Aorta (tissue), 5 donors: ENCODE measurements at regions of chr12 and their contacts with region 1.

Region 1: GRCh38 chr12:103965590-103966504 is at the start of gene TDG:
- DNase-seq: peak; percentile 99
- ATAC-seq: peak; percentile 99
- H3K4me3 ChIP-seq: peak within 1 kb of the TSS; percentile 79 to 97
- H3K27ac ChIP-seq: peak within 1 kb of the TSS; percentile 78 to 93
- H3K4me1 ChIP-seq: peaks cover 2 to 9% of the 10 kb centered on the region in 2 donors
- H3K27me3 ChIP-seq: no peaks in the 10 kb centered on the region
- total RNA-seq, gene TDG: 20.4 to 22.2 TPM

Region 2: DNA sequence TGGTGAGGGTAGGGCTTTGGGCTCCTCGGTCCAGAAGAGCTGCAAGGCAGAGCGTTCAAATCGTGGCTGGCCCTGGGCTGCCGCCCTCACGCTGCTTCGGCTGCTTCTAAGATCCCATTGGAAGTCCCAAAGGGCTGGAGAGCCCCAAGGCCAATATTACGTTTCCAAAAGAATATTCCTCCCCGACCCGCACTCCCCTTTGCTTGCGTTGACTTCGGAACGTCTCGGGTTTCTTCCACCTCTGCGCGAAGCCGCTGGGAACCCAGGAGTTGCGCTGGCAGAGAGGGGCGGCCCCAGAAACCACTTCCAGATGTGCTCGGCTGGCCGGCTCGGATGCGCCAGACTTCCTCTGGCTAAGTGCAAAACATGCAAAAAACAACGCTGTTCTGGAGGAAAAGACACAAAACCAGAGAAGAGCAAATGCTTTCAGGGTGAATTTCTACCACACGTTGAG is 84.1 kb after region 1 on chr12 and contains the start of gene GLT8D2:
- intact Hi-C with region 1: loop called in 1 of 2 experiments (anchors 10 kb)
- DNase-seq: peak; percentile 75 to 86
- ATAC-seq: peak; percentile 85
- H3K4me3 ChIP-seq: peak within 1 kb of the TSS; percentile 44 to 74
- H3K27ac ChIP-seq: peak within 1 kb of the TSS; percentile 58 to 60
- H3K4me1 ChIP-seq: peaks cover 0 to 6% of the 10 kb centered on the region in 2 donors
- H3K27me3 ChIP-seq: no peaks in the 10 kb centered on the region
- total RNA-seq, gene GLT8D2: 28.2 to 64.4 TPM

Region 3: DNA sequence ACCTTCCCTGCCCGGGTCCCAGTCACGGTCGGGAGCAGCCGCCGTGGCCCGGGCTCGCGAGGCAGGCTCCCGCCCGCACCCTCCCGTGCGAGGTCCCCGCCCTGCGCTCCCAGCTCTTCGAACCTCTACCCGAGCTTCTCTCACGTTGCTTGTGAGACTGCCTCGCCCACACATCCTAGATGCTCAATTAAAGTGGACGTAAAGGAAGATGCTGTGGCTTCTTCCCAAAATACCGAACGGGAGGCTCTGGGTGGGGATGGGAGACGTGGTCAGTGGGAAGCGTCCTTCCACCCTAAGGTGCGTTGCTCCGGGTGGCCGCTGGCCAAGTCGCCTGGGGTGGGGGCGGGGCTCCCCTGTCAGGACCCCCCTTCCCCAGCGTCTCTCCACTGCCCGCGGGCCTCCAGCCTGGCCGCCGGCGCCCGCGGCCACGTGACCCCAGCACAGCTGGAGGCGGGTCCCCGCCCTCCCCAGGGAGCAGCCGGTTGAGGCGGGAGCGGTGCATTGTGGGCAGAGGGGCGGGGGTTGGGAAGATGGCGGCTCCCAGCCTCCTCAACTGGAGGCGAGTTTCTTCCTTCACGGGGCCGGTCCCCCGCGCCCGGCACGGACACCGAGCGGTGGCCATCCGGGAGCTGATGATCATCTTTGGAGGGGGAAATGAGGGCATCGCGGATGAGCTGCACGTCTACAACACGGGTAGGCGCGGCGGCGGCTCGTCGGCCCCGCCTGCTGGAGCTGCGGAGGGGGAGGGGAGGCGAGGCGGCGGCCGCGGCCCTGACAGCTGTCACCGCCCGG is 98.4 kb after region 1 on chr12 and contains the start of gene HCFC2:
- intact Hi-C with region 1: loop called in 1 of 2 experiments (anchors 5 kb)
- DNase-seq: peak; percentile 95 to 98
- ATAC-seq: peak; percentile 100
- H3K4me3 ChIP-seq: peak within 1 kb of the TSS; percentile 80 to 96
- H3K27ac ChIP-seq: peak within 1 kb of the TSS; percentile 31 to 85
- H3K4me1 ChIP-seq: peaks cover 2 to 4% of the 10 kb centered on the region in 2 donors
- H3K27me3 ChIP-seq: no peaks in the 10 kb centered on the region
- total RNA-seq, gene HCFC2: 27.0 to 32.3 TPM